Caco-2 (cell line): ENCODE measurements at regions of chr16 and their contacts with region 1.

Region 1: DNA sequence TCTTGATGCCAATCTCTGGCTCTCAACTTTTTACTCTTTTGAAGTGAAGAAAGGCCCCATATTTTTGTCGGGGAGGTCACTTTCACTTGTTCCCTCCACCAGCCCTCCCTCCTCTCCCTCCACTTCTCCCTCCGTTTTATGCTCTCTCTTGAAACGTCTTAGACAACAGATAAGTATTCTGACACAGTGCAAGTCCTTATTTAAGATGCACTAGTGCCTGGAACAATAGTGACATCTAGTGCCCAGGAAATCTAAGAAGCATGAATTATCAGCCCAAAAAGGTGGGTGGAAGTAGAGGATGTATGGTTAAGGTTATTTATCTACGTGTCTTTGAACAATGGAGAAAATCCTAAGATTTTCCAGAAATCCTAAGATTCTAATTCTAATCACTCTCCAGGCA is 17.9 kb downstream of the PSME3IP1 start:
- DNase-seq: peak in 1 of 2 experiments; percentile 55
- H3K4me3 ChIP-seq: no peak overlapping the region
- H3K4me3 Mint-ChIP-seq: no peak overlapping the region
- H3K27ac Mint-ChIP-seq: no peak overlapping the region
- H3K4me1 ChIP-seq: no peaks in the 10 kb centered on the region
- H3K4me1 Mint-ChIP-seq: no peaks in the 10 kb centered on the region
- H3K27me3 ChIP-seq: no peaks in the 10 kb centered on the region
- H3K27me3 Mint-ChIP-seq: no peaks in the 10 kb centered on the region
- CTCF ChIP-seq: peak; percentile 53 to 60

Region 2: GRCh38 chr16:56866943-56867830 is 300.8 kb before region 1 on chr16:
- CTCF ChIA-PET with region 1: no interaction called
- POLR2A ChIA-PET with region 1: no interaction called
- intact Hi-C with region 1: loop called (anchors 1 kb)
- DNase-seq: peak in 1 of 2 experiments; percentile 68
- H3K4me3 ChIP-seq: no peak overlapping the region
- H3K4me3 Mint-ChIP-seq: no peak overlapping the region
- H3K27ac Mint-ChIP-seq: peak overlapping the region; percentile 60
- H3K4me1 ChIP-seq: peaks cover 38% of the 10 kb centered on the region
- H3K4me1 Mint-ChIP-seq: peaks cover 35% of the 10 kb centered on the region
- H3K27me3 ChIP-seq: no peaks in the 10 kb centered on the region
- H3K27me3 Mint-ChIP-seq: no peaks in the 10 kb centered on the region
- CTCF ChIP-seq: peak; percentile 76 to 83

Region 3: DNA sequence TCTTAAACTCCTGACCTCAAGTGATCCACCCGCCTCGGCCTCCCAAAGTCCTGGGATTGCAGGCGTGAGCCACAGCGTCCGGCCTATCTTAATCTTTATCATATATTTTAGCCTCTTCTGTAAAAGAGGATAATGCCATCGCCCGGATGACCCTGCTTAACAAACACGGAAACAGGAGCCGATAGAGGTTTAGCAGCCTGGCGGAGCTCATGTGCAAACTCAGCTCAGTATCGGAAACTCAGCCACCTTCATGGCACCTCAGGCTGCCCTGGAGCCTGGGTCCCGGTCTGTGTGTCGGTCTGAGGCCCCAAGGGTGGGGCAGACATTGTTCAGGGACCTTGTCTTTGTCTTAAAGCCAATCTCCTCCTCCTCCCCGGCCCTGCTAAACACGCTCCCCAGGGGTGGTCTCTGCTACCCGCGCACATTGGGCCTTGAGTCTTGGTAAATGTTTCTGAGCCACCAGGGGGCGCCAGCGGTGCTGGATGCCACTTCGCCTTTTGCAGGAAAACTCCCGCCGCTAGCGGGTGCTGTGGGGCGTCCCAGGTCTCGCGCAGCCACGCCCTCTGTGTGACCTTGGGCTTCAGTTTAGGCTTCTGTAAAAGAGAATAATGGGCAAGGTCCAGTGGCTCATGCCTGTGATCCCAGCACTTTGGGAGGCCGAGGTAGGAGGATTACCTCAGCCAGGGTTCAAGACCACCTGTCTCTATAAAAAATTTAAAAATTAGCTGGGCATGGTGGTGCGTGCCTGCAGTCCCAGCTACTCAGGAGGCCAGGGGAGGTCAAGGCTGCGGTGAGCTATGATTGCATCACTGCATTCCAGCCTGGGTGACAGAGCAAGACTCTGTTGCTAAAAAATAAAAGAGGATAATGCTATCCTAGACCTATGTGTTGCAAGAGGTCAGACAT is 203.5 kb before region 1 on chr16:
- CTCF ChIA-PET with region 1: no interaction called
- POLR2A ChIA-PET with region 1: no interaction called
- intact Hi-C with region 1: loop called (anchors 5 kb)
- DNase-seq: peak in 1 of 2 experiments; percentile 62
- H3K4me3 ChIP-seq: no peak overlapping the region
- H3K4me3 Mint-ChIP-seq: no peak overlapping the region
- H3K27ac Mint-ChIP-seq: no peak overlapping the region
- H3K4me1 ChIP-seq: peaks cover 10% of the 10 kb centered on the region; the same call in 1 of the 2 replicates
- H3K4me1 Mint-ChIP-seq: peaks cover 23% of the 10 kb centered on the region
- H3K27me3 ChIP-seq: no peaks in the 10 kb centered on the region
- H3K27me3 Mint-ChIP-seq: no peaks in the 10 kb centered on the region
- CTCF ChIP-seq: peak; percentile 31 to 72

Region 4: DNA sequence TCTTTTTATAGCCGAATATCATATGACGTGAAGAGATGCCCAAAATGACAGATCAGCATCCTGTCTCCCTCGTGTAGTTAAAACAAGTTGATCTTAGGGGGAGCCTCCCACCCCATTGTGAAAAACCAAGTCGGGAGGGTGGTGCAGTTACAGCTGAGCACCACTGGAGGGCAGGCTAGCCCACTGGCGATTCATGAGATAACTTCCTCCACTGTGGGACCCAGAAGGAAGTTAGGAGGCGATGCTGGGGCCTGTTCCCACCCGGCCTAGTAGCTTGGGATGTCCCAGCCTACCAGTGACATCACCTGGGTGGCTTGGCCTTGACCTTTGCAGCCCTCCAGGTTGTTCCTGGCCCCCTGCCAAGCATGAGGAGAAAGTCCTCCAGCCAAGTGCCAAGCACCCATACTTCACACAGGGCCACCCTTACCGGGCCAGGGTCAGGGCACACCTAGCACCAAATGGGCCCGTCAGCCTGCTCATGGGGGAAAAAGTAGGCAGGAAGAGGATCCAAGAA is 83.6 kb before region 1 on chr16:
- CTCF ChIA-PET with region 1: no interaction called
- POLR2A ChIA-PET with region 1: no interaction called
- intact Hi-C with region 1: loop called (anchors 1 kb)
- DNase-seq: peak; percentile 68 to 81
- H3K4me3 ChIP-seq: no peak overlapping the region
- H3K4me3 Mint-ChIP-seq: no peak overlapping the region
- H3K27ac Mint-ChIP-seq: no peak overlapping the region
- H3K4me1 ChIP-seq: peaks cover 6% of the 10 kb centered on the region; the same call in 1 of the 2 replicates
- H3K4me1 Mint-ChIP-seq: no peaks in the 10 kb centered on the region
- H3K27me3 ChIP-seq: peaks cover 2% of the 10 kb centered on the region; the same call in 1 of the 2 replicates
- H3K27me3 Mint-ChIP-seq: peaks cover 4% of the 10 kb centered on the region
- CTCF ChIP-seq: peak; percentile 99

Region 5: DNA sequence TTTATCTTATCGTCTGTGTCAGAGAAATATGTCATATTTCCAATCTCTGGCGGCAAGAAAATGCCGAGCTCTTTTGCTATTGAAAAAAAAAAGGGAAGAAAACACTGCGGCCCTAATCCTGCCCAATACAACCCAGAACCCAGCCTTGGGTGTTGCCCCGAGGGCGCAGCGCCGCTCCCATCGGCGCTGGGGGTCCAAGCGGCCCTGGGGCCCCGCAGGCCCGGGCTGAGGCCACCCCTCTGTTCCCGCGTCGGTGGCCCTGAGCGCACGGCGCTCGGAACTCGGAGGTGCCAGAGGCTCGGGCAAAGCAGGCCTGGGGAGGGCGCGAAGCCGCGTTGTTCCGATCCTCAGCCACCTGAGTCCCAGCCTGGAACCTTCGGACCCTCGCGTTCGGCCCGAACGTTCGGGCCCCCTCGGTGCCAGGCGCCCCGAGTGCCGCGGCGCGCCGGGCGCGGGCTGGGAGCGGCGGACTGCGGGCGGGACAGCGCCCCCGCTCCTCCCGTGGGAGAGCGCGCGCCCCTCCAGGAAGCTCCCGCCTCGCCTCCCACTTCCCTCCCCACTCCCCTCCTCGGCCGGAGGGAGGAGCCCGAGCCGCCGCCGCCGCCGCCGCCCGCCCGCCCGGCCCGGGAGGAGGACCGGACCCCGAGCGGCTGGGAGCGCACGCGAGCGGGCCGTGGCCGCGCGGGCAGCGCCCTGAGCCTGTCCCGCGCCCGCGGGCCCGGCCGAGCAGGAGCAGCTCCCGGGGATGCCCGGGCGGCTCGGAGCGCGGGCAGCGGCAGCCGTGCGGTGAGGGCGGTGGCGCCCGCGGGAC is 75.8 kb before region 1 on chr16 and contains the start of gene CPNE2:
- CTCF ChIA-PET with region 1: interaction called, 3 read pairs
- POLR2A ChIA-PET with region 1: no interaction called
- intact Hi-C with region 1: loop called (anchors 2 kb)
- DNase-seq: peak; percentile 68 to 82
- H3K4me3 ChIP-seq: peak within 1 kb of the TSS; percentile 85
- H3K4me3 Mint-ChIP-seq: peak within 1 kb of the TSS; percentile 77
- H3K27ac Mint-ChIP-seq: peak within 1 kb of the TSS; percentile 59
- H3K4me1 ChIP-seq: peaks cover 14% of the 10 kb centered on the region
- H3K4me1 Mint-ChIP-seq: peaks cover 12% of the 10 kb centered on the region
- H3K27me3 ChIP-seq: no peaks in the 10 kb centered on the region
- H3K27me3 Mint-ChIP-seq: no peaks in the 10 kb centered on the region
- CTCF ChIP-seq: peak in 1 of 2 experiments; percentile 7
- total RNA-seq, gene CPNE2: 37.7 and 46.3 TPM in 2 replicates

Region 6: DNA sequence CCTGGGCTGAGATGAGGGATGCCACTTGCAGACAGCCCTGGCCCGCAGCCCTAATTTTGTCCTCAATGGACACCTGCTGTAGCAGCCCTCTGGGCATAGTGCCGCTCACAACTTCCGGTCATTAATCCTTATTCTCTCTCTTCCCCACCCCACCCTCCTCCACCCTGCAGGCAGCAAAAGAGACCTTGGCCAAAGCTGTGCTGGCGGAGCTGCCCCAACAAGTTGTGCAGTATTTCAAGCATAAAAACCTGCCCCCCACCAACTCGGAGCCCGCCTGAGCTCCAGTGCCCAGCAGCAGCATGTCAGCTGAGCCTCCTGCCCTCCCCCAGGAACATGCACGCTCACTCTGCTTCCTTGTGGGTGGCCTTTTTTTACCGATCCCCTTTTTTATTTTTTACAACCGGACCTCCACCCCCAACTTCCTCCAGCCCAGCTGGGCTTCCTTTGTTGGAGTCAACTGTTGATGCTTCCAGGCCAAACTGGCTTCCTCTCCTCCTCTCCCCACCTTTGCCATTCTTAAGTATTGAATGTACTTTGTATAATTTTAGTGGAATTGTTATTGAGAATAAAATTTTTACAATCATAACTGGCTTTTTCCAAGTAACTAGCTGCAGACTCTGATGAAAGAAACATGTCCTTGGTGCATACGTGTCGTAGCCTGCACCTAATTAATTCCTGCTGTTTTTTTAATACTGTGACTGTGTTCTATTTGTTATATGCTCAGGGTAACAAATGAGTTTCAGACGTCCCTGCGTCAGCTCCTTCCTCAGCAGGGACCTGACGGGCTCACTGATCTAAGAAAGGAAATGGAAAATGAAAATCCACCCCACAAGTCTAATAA is 20.4 kb before region 1 on chr16:
- CTCF ChIA-PET with region 1: no interaction called
- POLR2A ChIA-PET with region 1: no interaction called
- intact Hi-C with region 1: loop called (anchors 1 kb)
- DNase-seq: no peak
- H3K4me3 ChIP-seq: no peak overlapping the region
- H3K4me3 Mint-ChIP-seq: no peak overlapping the region
- H3K27ac Mint-ChIP-seq: no peak overlapping the region
- H3K4me1 ChIP-seq: no peaks in the 10 kb centered on the region; the same call in 1 of the 2 replicates
- H3K4me1 Mint-ChIP-seq: no peaks in the 10 kb centered on the region
- H3K27me3 ChIP-seq: no peaks in the 10 kb centered on the region
- H3K27me3 Mint-ChIP-seq: no peaks in the 10 kb centered on the region
- CTCF ChIP-seq: no peak